ENCODE measurements at regions of chr3 and their contacts with region 1.

Region 1: DNA sequence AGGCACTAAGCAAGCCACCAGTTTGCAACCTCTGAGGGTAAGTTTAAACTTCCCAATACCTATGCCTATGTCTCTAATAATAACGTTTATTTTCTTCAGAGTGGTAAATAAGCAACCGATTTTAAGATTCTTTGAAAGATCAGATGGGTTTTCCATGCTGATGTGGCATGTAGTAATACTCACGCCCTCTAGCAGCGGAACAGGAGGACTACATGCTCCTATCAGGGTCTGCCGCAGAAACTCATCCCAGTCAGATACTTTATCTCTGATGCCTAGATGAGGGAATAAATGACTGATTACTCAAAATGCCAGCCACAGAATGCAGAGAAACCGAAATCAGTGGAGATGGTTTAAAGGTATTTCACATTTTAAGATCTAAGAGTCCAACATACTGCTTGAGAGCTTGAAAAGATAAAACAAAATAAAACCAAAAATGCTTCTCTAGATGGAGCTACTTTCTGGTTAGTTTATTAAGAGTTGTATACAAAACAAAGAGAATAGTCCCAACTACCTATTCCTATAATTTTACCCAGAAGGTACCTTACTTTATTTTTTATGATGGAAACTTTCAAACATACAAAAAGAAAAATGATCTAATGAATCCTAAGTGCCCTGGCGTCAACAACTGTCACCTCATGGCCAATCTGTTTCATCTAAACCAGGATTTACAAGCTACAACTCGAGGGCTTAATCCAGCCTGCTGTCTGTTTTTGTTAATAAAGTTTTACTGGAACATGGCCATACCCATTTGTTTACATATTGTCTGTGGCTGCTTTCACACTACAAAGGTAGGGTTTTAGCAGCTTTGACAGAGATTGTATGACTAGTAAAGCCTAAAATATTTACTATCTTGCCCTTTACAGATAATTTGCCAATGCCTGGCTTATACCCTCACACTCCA is 37.5 kb upstream of the STIMATE start:
- DNase-seq: peak in 2 of 3 donors; percentile 25 to 54
- ATAC-seq: peak; percentile 79 to 85
- H3K4me3 ChIP-seq: no peak overlapping the region
- H3K27ac ChIP-seq: no peak overlapping the region
- H3K4me1 ChIP-seq: no peaks in the 10 kb centered on the region
- H3K27me3 ChIP-seq: no peaks in the 10 kb centered on the region

Region 2: GRCh38 chr3:52742418-52743041 is 192.3 kb before region 1 on chr3:
- intact Hi-C with region 1: loop called in 1 of 4 experiments (anchors 10 kb)
- DNase-seq: no peak
- ATAC-seq: peak in 1 of 2 donors; percentile 42
- H3K4me3 ChIP-seq: no peak overlapping the region
- H3K27ac ChIP-seq: no peak overlapping the region
- H3K4me1 ChIP-seq: no peaks in the 10 kb centered on the region
- H3K27me3 ChIP-seq: no peaks in the 10 kb centered on the region

Region 3: DNA sequence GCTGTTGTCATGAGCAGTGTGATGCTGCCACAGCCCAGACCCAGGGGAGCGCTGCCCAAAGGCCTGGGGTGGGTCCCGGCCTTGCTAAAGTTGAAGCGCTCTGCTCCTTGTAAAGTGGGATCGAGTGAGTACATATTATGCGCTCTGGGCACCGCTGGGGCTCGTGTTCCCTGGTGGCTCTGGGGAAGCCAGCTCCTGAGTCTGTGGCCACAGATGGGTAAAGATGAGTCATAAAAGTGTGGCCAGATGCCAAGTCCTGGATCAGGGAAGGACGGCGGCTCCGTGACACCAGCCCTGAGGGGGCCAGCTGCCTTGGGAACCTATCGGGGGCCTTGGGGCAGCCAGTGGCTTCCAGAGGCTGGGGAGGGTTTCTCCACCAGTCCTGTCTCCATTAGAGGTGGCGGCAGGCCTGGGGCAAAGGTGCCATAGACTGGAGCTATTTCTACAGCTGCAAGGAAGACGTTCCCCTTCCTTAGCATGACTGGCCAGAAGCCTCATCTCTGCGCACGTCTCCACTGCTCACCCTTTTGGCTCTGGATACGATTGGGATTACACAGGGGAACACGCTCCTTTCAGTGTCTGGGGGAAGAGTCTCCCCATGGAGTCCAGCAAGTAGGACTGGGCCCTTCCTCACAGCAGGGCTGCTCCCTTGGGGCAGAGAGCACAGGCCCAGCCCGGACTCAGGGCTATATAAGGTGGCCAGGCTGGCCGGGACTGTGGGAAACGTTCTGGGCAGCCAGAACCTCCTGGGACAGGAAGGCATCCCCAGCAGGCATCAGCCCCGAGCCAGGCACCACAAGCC is 103.2 kb before region 1 on chr3:
- intact Hi-C with region 1: no loop called
- DNase-seq: peak; percentile 58 to 71 (median 66)
- ATAC-seq: peak; percentile 17 to 54
- H3K4me3 ChIP-seq: no peak overlapping the region
- H3K27ac ChIP-seq: peak overlapping the region; percentile 13
- H3K4me1 ChIP-seq: peaks cover 3% of the 10 kb centered on the region
- H3K27me3 ChIP-seq: no peaks in the 10 kb centered on the region